ENCODE measurements at regions of chrX and their contacts with region 1.

Region 1: DNA sequence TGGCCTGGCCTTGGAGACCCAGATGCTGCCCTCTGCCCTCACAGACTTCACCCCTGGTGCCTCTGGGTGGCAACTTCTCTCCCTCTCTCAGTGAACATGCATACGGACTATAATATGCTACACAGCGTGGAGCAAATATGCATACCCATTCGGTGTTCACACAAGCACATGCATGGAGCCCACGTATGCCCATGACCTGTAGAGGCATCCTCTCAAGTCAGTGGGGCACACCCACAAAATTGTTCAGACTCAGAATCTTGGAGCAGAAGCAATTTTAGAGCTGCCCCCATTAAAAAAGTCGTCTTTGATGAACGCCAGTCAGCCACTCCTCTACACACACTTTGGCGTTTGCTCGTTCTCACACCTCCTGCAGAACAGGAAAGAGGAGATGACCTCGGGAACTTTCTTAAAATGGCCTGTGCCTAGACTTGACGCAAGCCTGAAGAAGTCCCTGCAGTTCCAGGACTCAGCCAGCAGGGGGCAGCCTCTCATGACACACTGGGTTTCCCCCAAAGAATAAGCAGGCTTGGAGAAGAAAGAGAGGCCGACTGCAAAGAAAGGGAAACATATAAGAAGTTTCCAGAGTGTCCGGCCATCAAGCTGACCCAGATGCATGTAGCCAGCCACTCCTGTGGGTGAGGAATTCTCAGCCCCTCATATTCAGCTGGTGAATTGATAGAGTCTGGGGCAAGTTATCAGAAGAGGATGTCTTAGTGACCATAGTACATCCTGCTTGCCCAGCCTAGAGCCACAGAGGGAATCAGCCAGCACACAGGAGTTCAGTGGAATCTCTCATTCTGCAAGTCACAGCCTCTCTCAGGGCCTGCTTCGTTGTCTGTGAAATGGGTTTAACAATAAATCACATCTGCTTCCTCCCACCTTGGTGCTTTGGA is 17.3 kb downstream of the APLN start:
- DNase-seq: peak; percentile 82
- ATAC-seq: peak; percentile 89

Region 2: DNA sequence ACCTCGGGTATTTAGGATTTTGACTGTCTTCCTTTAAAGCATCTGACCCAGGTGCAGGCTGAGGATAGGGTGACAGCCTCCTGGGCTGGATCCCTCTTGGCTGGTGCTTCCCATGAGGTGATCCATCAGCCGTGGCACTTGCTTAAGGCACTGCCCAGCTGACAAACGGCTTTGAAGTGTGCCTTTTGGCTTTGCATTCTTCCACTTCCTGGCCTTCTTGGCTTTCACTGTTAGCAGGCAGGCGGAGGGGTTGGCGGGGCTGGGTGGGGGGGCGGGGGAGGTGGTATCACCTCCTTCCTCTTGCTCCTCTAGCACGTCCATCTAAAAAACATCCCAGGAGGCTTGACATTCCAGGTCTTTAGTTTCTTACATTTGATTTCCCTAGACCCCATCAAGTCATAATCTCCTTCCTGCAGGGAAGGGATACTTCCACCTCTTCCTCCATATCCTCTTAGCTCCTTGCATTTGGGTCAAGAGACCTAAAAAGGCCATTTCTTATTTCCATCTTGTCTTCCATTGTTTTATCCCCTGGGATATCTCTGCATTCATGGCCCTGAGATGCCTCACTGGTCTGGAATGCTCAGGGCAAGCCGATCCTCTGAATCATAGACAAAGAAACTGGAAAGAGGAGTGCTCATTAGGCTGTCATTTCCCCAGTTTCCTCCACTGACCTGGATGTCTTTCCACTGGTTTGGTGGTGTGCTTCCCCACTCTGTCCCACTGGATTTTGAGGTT is 28.6 kb after region 1 on chrX:
- intact Hi-C with region 1: no loop called
- DNase-seq: no peak
- ATAC-seq: no peak

Region 3: GRCh38 chrX:129726307-129727111 is 89.0 kb after region 1 on chrX:
- intact Hi-C with region 1: loop called (anchors 2 kb)
- DNase-seq: peak; percentile 60
- ATAC-seq: peak; percentile 91